WTC11 (cell line): ENCODE measurements at regions of chr10 and their contacts with region 1.

Region 1: DNA sequence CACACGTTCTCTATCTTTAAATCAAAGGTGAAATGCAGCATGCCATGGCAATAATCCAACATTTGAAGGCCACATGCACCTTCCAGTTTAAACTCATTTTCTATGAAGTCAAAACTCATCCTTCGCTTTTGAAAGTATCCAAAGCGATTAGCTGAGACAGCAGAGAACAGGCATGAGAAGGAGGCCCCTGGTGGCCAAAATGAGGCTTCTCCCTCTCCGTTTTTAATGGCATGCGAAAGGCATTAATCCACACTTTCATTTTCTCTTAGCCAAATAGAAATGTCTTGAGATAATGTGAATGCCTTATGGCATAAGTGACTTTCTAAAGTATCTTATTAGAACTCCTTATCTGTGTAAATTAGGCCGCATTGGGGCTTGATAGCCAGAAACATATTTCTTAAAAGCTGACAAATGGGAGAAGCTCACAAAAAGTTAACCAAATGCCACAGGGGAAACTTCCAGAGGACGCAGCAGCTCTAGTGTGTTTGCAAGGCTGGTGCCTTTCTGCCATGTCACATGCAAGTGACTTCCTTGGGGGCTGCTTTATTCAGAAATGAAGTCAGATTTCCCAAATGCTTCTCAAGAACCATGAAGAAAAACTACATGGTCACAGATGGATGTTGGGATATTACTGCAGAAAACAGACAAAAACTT is 1189.6 kb downstream of the SORCS1 start:
- DNase-seq: peak; percentile 33
- ATAC-seq: peak; percentile 75
- H3K4me3 Mint-ChIP-seq: no peak overlapping the region
- H3K27ac Mint-ChIP-seq: no peak overlapping the region
- H3K4me1 Mint-ChIP-seq: peaks cover 40% of the 10 kb centered on the region
- H3K27me3 Mint-ChIP-seq: no peaks in the 10 kb centered on the region
- CTCF ChIP-seq: peak; percentile 49

Region 2: DNA sequence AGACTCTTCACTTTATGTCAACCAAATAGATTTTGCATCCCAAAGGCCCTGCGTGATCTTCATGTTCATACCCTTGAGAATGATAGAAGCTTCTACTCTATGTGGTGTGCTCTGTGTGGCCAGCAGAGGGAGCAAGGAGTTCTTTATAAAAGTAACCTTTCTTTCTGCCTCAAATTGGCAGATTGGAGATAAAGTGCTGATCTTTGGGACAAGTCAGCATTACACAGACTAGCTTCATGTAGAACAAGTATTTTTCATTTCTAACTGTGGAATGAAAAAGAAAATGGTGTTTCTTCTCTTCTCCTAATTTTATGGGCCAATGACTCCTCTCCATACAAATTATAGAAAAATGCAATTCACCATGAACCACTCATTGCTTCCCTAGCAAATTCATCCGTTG is 24.5 kb before region 1 on chr10:
- CTCF ChIA-PET with region 1: interaction called, 36 read pairs
- POLR2A ChIA-PET with region 1: interaction called, 3 read pairs
- DNase-seq: peak; percentile 49
- ATAC-seq: peak; percentile 72
- H3K4me3 Mint-ChIP-seq: no peak overlapping the region
- H3K27ac Mint-ChIP-seq: no peak overlapping the region
- H3K4me1 Mint-ChIP-seq: peaks cover 23% of the 10 kb centered on the region
- H3K27me3 Mint-ChIP-seq: no peaks in the 10 kb centered on the region
- CTCF ChIP-seq: peak; percentile 61

Region 3: DNA sequence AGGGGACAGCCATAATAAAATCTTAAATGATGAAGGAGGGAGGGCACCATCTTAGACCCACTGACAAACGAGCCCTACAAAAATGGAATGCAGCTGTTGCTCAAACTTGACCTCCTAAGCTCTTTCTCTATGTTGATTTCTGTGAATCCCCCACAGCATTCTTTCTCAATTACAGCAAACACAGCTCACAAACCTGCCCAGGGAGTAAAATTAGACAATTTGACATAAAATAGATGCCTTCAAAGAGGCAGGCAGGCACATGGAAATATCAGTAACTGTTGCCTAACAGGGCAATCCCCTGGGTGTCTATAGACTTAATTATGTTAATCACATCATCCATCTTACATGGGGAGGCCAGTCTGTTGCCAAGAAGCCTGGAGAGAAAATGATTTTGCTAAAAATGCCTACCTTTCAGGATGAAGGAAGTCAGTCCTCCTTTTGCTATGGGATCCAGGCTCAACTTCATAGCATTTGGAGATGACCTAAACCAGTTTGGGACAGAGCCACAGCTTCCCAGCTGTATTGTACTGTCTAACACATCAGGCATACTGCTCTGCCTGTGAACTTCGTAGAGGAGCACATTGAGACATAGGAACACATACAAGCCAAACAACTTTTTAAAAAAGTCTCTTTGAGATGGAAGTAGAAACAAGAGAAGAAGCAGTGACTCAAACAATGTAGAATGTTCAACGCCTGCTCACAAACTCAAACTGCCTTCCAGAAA is 12.1 kb after region 1 on chr10:
- CTCF ChIA-PET with region 1: interaction called, 21 read pairs
- POLR2A ChIA-PET with region 1: no interaction called
- DNase-seq: no peak
- ATAC-seq: no peak
- H3K4me3 Mint-ChIP-seq: no peak overlapping the region
- H3K27ac Mint-ChIP-seq: no peak overlapping the region
- H3K4me1 Mint-ChIP-seq: peaks cover 4% of the 10 kb centered on the region; the same call in 1 of the 2 replicates
- H3K27me3 Mint-ChIP-seq: no peaks in the 10 kb centered on the region
- CTCF ChIP-seq: no peak